Tibial artery (tissue), 4 donors: ENCODE measurements at regions of chr9 and their contacts with region 1.

Region 1: GRCh38 chr9:71249729-71250317 is 128.4 kb upstream of the TRPM3 start:
- DNase-seq: no peak
- H3K4me3 ChIP-seq: no peak overlapping the region
- H3K27ac ChIP-seq: no peak overlapping the region
- H3K4me1 ChIP-seq: no peaks in the 10 kb centered on the region
- H3K27me3 ChIP-seq: no peaks in the 10 kb centered on the region
- CTCF ChIP-seq: peak; percentile 77 to 78

Region 2: GRCh38 chr9:70639853-70640814 is 609.7 kb before region 1 on chr9:
- intact Hi-C with region 1: loop called (anchors 2 kb)
- DNase-seq: no peak
- H3K4me3 ChIP-seq: peak overlapping the region; percentile 25 to 26
- H3K27ac ChIP-seq: no peak overlapping the region
- H3K4me1 ChIP-seq: peaks cover 0 to 5% (median 0%) of the 10 kb centered on the region in 4 donors
- H3K27me3 ChIP-seq: no peaks in the 10 kb centered on the region
- CTCF ChIP-seq: peak; percentile 64 to 80

Region 3: DNA sequence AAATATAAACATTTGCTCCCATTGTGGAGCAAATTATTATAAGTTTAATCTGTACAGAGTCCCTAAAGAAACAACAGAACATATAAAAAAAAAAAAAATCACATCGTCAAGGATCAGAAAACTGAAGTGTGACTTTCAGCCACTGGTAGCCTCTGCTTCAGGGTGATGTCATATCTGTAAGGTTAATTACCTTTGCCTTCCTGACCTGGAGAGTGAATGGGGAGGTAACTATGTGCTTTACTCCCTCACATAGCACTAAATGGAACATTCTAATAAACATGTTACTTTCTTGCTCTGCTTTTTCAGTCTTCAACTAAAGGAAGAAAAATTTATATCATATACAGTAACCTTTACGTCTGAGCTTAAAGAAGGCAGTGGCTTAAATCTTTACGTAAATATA is 58.1 kb before region 1 on chr9:
- intact Hi-C with region 1: no loop called
- DNase-seq: no peak
- H3K4me3 ChIP-seq: no peak overlapping the region
- H3K27ac ChIP-seq: no peak overlapping the region
- H3K4me1 ChIP-seq: peaks cover 0 to 3% (median 0%) of the 10 kb centered on the region in 4 donors
- H3K27me3 ChIP-seq: no peaks in the 10 kb centered on the region
- CTCF ChIP-seq: no peak